ENCODE measurements at regions of chr17 and their contacts with region 1.

Region 1: DNA sequence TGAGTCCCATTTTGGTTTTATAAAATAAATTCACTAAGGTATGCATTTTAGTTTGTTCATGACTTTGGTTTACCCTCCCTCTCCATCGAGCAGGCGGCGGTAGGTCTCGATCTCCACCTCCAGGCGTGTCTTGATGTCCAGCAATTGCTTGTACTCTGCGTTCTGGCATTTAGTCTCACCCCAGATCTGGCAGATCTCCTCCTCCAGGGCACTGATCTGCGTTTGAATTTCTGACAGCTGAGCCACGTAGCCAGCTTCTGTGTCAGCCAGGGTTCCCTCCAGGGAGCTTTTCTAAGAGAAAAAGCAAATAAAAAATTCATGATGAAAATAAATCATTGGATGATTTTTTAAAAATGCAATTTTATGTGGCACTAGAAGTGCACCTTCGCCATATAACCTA is 4.2 kb downstream of the KRT24 start:
- DNase-seq: no peak
- H3K4me3 Mint-ChIP-seq: no peak overlapping the region
- H3K27ac Mint-ChIP-seq: no peak overlapping the region
- H3K4me1 Mint-ChIP-seq: no peaks in the 10 kb centered on the region
- H3K27me3 Mint-ChIP-seq: peaks cover 21% of the 10 kb centered on the region

Region 2: DNA sequence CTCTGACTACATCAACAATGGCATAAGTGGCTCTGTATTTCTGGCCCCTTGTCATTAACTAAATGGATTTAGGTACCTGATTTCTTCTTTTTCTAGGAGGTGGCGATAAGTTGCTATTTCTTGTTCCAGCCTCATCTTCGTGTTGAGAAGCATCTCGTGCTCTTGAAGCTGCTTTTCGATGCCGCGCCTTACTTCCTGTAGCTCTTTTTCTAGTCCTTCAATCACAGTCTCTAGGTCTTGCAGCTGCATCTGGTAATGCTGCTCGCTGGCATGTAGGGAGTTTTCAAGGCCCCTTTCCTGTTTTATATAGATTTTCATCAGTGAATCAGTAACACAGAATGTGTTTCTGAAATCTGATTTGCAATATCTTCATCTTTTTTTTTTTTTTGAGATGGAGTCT is 39.5 kb before region 1 on chr17:
- CTCF ChIA-PET with region 1: no interaction called
- POLR2A ChIA-PET with region 1: no interaction called
- intact Hi-C with region 1: loop called (anchors 1 kb)
- DNase-seq: no peak
- H3K4me3 Mint-ChIP-seq: no peak overlapping the region
- H3K27ac Mint-ChIP-seq: no peak overlapping the region
- H3K4me1 Mint-ChIP-seq: peaks cover 8% of the 10 kb centered on the region
- H3K27me3 Mint-ChIP-seq: peaks cover 15% of the 10 kb centered on the region